ENCODE measurements at regions of chr12 and their contacts with region 1.

Region 1: DNA sequence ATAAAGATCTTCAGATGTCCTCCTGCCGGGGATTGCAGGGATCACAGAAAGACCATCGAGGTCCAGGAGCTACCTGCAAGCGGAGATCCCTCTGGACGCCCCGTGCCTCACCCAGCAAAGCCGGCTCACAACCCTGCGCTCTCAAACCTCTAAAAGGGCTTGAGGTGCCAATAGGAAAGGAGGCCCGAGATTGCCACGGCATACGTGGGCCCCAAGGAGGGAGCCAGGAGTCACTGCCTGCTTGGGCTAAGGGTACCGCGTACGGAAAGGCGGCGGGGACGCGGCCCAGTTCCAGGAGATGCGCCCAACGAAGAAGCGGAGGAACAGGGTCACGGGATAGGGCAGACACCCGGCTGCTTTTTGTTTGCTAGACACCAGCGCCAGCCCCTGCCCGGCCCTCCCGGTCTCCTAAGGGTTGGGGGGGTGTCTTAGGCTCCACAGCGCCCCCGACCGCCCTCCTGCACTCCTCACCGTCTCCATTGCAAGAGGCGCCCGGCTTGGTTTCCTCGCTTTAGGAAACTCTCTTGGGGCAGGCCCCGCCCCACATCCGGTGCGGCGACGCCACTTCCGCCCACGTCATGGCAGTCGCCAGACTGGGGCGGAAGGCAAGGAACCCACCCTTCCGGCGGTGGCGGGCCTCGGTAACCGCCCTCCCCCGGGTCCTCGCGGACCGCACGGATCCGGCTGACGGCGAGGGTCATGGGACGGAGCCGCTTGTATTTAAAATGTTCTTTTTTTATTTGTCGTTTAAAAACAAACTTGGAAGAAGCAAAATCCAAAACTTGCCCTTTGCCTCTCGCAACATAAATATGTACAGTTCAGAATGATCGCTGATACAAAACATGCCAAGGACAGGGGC is at the start of gene PRKAG1:
- DNase-seq: peak; percentile 87 to 98
- H3K4me3 ChIP-seq: peak within 1 kb of the TSS; percentile 85 to 87
- H3K27ac ChIP-seq: peak within 1 kb of the TSS; percentile 86 to 96
- H3K4me1 ChIP-seq: peaks cover 0 to 6% of the 10 kb centered on the region in 2 donors
- H3K27me3 ChIP-seq: no peaks in the 10 kb centered on the region
- CTCF ChIP-seq: peak; percentile 5 to 56 (median 55)
- total RNA-seq, gene PRKAG1: 32.8 TPM

Region 2: GRCh38 chr12:48882315-48882687 is 136.2 kb before region 1 on chr12:
- intact Hi-C with region 1: no loop called
- DNase-seq: peak in 1 of 2 donors; percentile 68
- H3K4me3 ChIP-seq: peak overlapping the region; percentile 31 to 56
- H3K27ac ChIP-seq: peak overlapping the region in 1 of 2 donors; percentile 57
- H3K4me1 ChIP-seq: peaks cover 0 to 8% of the 10 kb centered on the region in 2 donors
- H3K27me3 ChIP-seq: no peaks in the 10 kb centered on the region
- CTCF ChIP-seq: no peak

Region 3: DNA sequence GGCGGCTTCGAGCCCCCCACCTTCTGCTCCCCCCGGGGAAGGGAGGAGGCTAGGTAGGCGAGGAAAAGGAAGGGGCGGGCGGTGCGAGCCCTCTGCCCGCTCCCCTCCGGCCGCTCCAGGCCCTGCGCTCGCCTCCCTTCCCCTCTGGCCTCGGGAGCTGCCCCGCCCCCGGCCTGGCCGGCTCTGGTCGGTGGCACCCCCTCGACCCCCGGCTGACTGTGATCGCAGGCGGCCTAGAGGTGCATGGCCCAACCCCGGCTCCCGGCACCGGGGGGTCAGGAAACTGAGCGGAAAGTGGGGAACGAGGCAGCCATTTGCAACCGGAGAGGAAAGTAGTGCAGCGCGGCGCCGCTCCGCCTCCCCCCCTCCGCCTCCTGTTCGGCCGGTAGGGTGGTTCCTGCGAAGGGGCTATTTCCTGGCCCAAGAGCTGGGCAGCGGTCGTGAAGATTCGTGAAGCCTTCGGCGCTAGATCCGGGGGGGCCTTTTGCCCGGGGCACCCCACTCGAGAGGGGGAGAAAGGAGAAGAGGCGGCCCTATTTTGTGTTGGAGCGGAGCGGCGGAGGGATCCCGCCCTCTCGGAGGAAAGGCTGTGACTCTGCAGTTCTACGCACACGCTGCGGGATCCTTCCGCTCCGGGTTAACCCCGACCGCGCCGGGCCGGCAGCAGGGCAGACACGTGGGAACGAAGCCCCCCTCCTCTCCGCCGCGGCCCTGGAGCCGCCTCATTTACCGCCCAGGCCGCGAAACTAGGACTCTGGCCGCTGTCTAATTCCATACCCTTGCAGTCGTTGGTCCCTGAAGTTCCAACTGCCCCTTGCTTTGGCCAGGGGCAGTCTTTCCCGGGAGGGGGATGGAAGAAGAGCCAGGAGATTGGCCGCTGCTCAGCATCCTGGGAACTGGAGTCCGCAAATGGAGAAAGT is 42.0 kb after region 1 on chr12 and contains the start of gene KMT2D:
- intact Hi-C with region 1: loop called (anchors 5 kb)
- DNase-seq: peak; percentile 30 to 94
- H3K4me3 ChIP-seq: peak within 1 kb of the TSS; percentile 96 to 97
- H3K27ac ChIP-seq: peak within 1 kb of the TSS; percentile 94 to 98
- H3K4me1 ChIP-seq: peaks cover 8 to 25% of the 10 kb centered on the region in 2 donors
- H3K27me3 ChIP-seq: no peaks in the 10 kb centered on the region
- CTCF ChIP-seq: peak; percentile 25 to 83 (median 25)
- total RNA-seq, gene KMT2D: 106 TPM

Region 4: GRCh38 chr12:49110464-49111155 is 92.1 kb after region 1 on chr12 and contains the start of gene LMBR1L:
- intact Hi-C with region 1: loop called (anchors 5 kb)
- DNase-seq: peak; percentile 90 to 100
- H3K4me3 ChIP-seq: peak within 1 kb of the TSS; percentile 69 to 73
- H3K27ac ChIP-seq: peak within 1 kb of the TSS; percentile 93 to 95
- H3K4me1 ChIP-seq: peaks cover 19 to 32% of the 10 kb centered on the region in 2 donors
- H3K27me3 ChIP-seq: no peaks in the 10 kb centered on the region
- CTCF ChIP-seq: peak; percentile 32 to 64 (median 50)
- total RNA-seq, gene LMBR1L: 74.2 TPM